GM12878 (cell line): ENCODE measurements at regions of chr20 and their contacts with region 1.

Region 1: GRCh38 chr20:19661717-19662636 is 96.1 kb upstream of the RIN2 start:
- DNase-seq: no peak
- ATAC-seq: peak; percentile 72
- H3K4me3 ChIP-seq: no peak overlapping the region
- H3K27ac ChIP-seq: no peak overlapping the region
- H3K4me1 ChIP-seq: peaks cover 11% of the 10 kb centered on the region
- H3K27me3 ChIP-seq: no peaks in the 10 kb centered on the region
- CTCF ChIP-seq: peak; percentile 96 to 99 (median 99); a peak in 5 of 6 replicates
- EP300 ChIP-seq: no peak
- POLR2A ChIP-seq: no peak
- RAD21 ChIP-seq: peak; percentile 99

Region 2: DNA sequence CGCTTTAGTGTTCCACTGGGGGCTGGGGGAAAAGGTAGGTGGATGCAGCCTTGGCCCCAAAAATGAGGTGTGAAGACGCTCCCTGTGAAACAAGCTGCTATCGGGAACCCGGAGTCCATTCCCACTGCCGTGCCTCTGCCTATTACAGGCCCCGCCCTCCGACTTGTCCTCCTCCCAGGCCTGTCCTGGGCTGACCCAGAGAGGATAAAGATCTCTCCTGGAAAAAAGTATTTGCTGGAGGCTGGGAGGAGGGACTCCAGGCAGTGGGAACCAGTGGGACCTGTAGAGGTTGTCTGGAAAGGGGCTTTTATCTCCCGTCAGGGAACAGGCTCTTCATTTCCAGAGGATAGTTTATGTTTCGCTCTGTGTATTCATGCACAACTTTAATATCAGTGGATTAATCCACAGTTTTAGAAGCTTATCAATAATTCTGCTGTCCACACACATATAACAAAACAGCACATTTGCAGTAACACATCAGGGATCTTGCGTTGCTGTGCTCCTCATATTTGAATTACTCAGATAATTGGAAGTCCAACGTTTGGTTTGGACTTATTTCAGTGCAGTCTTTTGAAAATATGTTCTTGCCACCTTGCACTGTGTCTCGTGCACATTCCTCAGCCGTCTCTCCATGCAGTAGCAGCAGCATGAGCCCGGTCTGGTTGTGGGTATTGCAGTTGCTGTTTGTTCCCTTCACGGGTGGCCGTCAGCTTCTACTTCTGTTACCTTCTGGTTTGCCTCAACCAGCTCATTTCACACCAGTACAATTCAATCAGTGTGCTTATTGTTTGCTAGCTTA is 234.3 kb before region 1 on chr20:
- CTCF ChIA-PET with region 1: no interaction called
- POLR2A ChIA-PET with region 1: no interaction called
- RAD21 ChIA-PET with region 1: no interaction called
- SMC1A ChIA-PET with region 1: no interaction called
- in situ Hi-C with region 1: no loop called
- intact Hi-C with region 1: no loop called
- DNase-seq: no peak
- ATAC-seq: no peak
- H3K4me3 ChIP-seq: no peak overlapping the region
- H3K27ac ChIP-seq: no peak overlapping the region
- H3K4me1 ChIP-seq: peaks cover 5% of the 10 kb centered on the region; the same call in 1 of the 2 replicates
- H3K27me3 ChIP-seq: peaks cover 0 to 5% of the 10 kb centered on the region in 2 experiments; a peak in 2 of 4 replicates
- CTCF ChIP-seq: no peak
- EP300 ChIP-seq: no peak
- POLR2A ChIP-seq: no peak
- RAD21 ChIP-seq: no peak

Region 3: GRCh38 chr20:19583532-19584175 is 78.3 kb before region 1 on chr20:
- CTCF ChIA-PET with region 1: interaction called, 24 read pairs
- POLR2A ChIA-PET with region 1: no interaction called
- RAD21 ChIA-PET with region 1: interaction called, 7 read pairs
- SMC1A ChIA-PET with region 1: interaction called, 6 read pairs
- in situ Hi-C with region 1: no loop called
- intact Hi-C with region 1: no loop called
- DNase-seq: no peak
- ATAC-seq: peak; percentile 87
- H3K4me3 ChIP-seq: no peak overlapping the region
- H3K27ac ChIP-seq: no peak overlapping the region
- H3K4me1 ChIP-seq: no peaks in the 10 kb centered on the region
- H3K27me3 ChIP-seq: no peaks in the 10 kb centered on the region; a peak in 2 of 4 replicates
- CTCF ChIP-seq: peak; percentile 70 to 87 (median 73)
- EP300 ChIP-seq: no peak
- POLR2A ChIP-seq: no peak
- RAD21 ChIP-seq: peak; percentile 95

Region 4: GRCh38 chr20:19628570-19629169 is 33.3 kb before region 1 on chr20:
- CTCF ChIA-PET with region 1: interaction called, 264 read pairs
- POLR2A ChIA-PET with region 1: no interaction called
- RAD21 ChIA-PET with region 1: interaction called, 94 read pairs
- SMC1A ChIA-PET with region 1: interaction called, 150 read pairs
- in situ Hi-C with region 1: no loop called
- intact Hi-C with region 1: loop called (anchors 1 kb)
- DNase-seq: peak; percentile 26
- ATAC-seq: peak; percentile 93
- H3K4me3 ChIP-seq: no peak overlapping the region
- H3K27ac ChIP-seq: no peak overlapping the region
- H3K4me1 ChIP-seq: no peaks in the 10 kb centered on the region
- H3K27me3 ChIP-seq: no peaks in the 10 kb centered on the region
- CTCF ChIP-seq: peak; percentile 62 to 76 (median 63)
- EP300 ChIP-seq: no peak
- POLR2A ChIP-seq: no peak
- RAD21 ChIP-seq: peak; percentile 67

Region 5: DNA sequence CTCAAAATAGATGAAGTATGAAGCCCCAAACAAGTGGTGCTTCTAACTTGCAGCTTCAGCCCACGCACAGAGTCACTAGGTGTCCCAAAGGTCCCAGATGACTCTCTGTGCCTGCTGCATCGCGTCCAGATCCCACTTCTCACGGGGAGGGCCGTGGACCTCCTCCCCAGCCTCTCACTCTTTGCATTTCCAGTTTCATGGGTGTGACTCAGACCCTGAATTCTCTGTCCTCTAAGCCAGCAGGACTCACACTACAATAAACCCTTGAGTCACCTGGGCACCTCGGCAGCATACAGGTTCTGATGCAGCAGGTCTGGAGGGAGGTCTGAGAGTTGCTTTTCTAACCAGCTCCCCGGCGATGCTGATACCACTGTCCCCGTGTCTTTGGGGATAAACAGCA is 17.9 kb before region 1 on chr20:
- CTCF ChIA-PET with region 1: interaction called, 39 read pairs
- POLR2A ChIA-PET with region 1: no interaction called
- RAD21 ChIA-PET with region 1: interaction called, 5 read pairs
- SMC1A ChIA-PET with region 1: interaction called, 32 read pairs
- in situ Hi-C with region 1: no loop called
- intact Hi-C with region 1: no loop called
- DNase-seq: no peak
- ATAC-seq: peak; percentile 42; the same call in 2 of the 3 replicates
- H3K4me3 ChIP-seq: no peak overlapping the region
- H3K27ac ChIP-seq: no peak overlapping the region
- H3K4me1 ChIP-seq: no peaks in the 10 kb centered on the region
- H3K27me3 ChIP-seq: no peaks in the 10 kb centered on the region
- CTCF ChIP-seq: no peak
- EP300 ChIP-seq: no peak
- POLR2A ChIP-seq: no peak
- RAD21 ChIP-seq: no peak